Brain microvascular endothelial cell (primary cell): ENCODE measurements at regions of chr2 and their contacts with region 1.

Region 1: DNA sequence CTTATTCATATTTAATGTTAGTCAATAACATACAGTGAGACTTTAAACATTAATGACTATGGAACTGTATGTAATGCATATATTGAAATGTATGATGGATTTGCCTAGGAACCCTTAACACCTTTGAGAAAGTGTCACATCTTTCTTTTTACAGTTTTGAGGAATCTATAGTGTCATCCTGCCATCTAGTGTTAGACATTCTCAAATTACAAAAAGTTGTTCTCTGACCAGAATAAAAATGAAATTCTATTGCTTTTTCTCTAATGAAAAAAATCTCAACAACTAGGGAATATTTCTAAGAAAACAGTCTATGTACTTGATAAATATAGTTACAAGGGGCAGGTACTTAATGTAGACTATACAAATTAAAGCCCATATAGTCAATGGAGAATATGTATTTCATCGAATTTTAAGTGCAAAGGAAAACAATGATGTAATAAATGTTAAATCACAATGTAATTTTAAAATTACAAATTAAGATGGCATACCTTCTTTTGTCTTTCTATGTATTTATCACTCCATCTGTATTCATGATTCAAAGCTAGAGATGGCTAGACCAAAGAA is 5.1 kb upstream of the CALCRL start:
- DNase-seq: no peak
- H3K4me3 ChIP-seq: no peak overlapping the region
- H3K27ac ChIP-seq: no peak overlapping the region
- H3K27me3 ChIP-seq: no peaks in the 10 kb centered on the region
- CTCF ChIP-seq: peak; percentile 8

Region 2: GRCh38 chr2:186862869-186863709 is 590.1 kb before region 1 on chr2:
- in situ Hi-C with region 1: loop called (anchors 25 kb)
- DNase-seq: no peak
- H3K4me3 ChIP-seq: no peak overlapping the region
- H3K27ac ChIP-seq: no peak overlapping the region
- H3K27me3 ChIP-seq: no peaks in the 10 kb centered on the region
- CTCF ChIP-seq: peak; percentile 47

Region 3: GRCh38 chr2:187174582-187174981 is 278.6 kb before region 1 on chr2:
- in situ Hi-C with region 1: no loop called
- DNase-seq: no peak
- H3K4me3 ChIP-seq: no peak overlapping the region
- H3K27ac ChIP-seq: no peak overlapping the region
- H3K27me3 ChIP-seq: no peaks in the 10 kb centered on the region
- CTCF ChIP-seq: peak; percentile 58

Region 4: DNA sequence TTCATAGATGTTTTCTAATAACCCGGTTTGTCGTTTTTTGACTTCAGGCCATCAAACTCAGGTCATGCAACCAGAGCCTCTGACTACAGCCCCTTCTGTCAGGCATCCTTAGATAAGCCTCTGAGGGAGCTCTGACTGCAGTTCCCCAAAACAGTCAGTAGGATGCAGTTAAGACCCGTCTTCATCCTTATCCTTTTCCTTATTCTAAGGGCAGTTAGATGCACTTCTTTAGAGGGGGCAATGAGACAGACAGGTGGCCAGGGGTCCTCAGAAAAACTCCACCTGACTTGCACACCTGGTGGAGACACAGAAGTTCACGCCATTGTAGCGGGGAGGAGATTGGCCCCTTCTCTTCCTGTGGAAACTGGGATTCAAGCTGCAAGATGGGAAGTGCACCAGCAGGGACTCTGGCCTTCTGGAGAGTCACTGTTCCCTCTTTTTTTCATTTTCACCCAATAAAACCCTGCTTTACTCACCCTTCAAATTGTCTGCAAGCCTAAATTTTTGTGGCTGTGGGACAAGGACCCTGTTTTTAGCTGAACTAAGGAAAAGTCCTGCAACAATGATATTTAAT is 205.9 kb after region 1 on chr2:
- in situ Hi-C with region 1: no loop called
- DNase-seq: peak; percentile 44
- H3K4me3 ChIP-seq: no peak overlapping the region
- H3K27ac ChIP-seq: no peak overlapping the region
- H3K27me3 ChIP-seq: no peaks in the 10 kb centered on the region
- CTCF ChIP-seq: peak; percentile 76

Region 5: DNA sequence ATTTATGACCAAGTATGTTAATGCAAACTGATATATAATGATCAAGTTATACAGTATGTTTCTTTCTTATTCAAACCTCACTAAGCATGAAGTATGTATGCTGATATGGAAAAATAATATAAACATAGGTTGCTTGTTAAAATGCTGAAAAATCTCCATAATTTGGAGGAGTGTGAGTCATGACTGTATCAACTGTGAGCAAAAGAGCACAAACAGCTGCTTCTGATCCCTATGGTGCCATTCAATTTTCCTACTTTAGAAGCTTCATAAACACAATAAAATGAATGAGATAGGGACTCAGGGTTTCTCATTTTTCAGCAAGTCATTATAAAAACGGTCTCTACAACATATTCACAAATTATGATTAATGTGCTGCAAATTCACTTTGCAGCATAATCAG is 231.0 kb after region 1 on chr2:
- in situ Hi-C with region 1: no loop called
- DNase-seq: no peak
- H3K4me3 ChIP-seq: no peak overlapping the region
- H3K27ac ChIP-seq: no peak overlapping the region
- H3K27me3 ChIP-seq: no peaks in the 10 kb centered on the region
- CTCF ChIP-seq: no peak

Region 6: GRCh38 chr2:187912950-187913349 is 459.8 kb after region 1 on chr2:
- in situ Hi-C with region 1: no loop called
- DNase-seq: no peak
- H3K4me3 ChIP-seq: no peak overlapping the region
- H3K27ac ChIP-seq: no peak overlapping the region
- H3K27me3 ChIP-seq: no peaks in the 10 kb centered on the region
- CTCF ChIP-seq: no peak